Aorta (tissue), 5 donors: ENCODE measurements at regions of chr10 and their contacts with region 1.

Region 1: DNA sequence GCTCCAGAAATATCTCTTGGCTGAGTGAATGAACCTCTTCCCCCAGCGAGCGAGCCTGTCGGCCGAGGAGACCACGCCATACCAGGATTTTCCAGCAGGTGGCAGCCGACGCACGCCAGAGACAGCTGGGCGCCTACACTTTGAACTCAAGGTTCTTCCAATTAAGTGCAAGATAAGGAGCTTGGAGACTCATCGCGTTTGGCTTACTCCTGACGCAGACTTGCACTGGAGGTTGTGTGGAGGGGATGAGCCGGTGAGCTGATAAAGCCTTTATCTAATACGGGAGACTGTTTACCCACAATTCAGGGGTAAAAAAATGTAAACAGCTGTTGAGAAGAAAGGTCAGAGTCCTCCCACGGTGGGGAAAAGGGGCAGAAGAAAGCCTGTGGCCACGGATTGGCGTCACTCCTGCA is 45.9 kb upstream of the EMX2 start:
- DNase-seq: peak; percentile 80 to 94
- ATAC-seq: peak; percentile 92
- H3K4me3 ChIP-seq: no peak overlapping the region
- H3K27ac ChIP-seq: no peak overlapping the region
- H3K4me1 ChIP-seq: no peaks in the 10 kb centered on the region
- H3K27me3 ChIP-seq: no peaks in the 10 kb centered on the region

Region 2: GRCh38 chr10:117216611-117217195 is 279.9 kb before region 1 on chr10:
- intact Hi-C with region 1: loop called in 1 of 2 experiments (anchors 10 kb)
- DNase-seq: peak; percentile 68 to 90
- ATAC-seq: peak; percentile 91
- H3K4me3 ChIP-seq: no peak overlapping the region
- H3K27ac ChIP-seq: no peak overlapping the region
- H3K4me1 ChIP-seq: no peaks in the 10 kb centered on the region
- H3K27me3 ChIP-seq: no peaks in the 10 kb centered on the region

Region 3: DNA sequence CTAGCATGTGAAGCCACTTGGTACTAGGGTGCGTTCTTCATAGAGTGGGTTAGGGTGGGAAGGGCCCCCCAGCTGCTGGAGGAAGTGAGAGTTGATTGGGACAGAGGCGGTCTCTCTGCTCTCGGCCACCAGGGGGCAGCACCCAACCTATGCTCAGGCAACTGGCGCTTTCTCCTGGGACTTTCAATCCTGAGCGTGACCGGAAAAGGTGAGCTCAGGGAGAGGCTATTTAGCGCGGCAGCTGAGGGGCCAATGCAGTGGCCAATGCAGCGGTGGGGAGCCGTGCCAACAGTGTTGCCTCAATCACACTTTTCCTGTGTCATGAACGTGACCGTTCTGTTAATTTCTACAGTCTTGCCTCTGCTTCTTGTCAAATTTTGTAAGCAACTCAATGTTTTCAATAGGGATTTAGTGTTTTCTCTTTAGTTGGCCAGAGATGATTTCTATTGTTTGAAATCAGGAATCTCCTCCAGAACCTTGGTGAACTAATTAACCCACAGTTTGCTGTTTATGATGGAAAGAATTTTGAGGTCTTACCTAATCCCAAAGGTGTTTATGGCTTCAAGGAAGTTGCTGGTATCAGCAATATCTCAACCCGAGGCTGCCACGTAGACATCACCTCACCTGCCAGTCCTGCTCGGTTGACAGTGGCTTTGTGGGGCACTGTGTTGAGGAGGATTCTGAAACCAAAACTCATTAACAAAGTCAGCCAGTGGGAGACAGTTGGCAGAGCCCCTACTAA is 53.5 kb before region 1 on chr10:
- intact Hi-C with region 1: loop called in 1 of 2 experiments (anchors 5 kb)
- DNase-seq: peak; percentile 90 to 96
- ATAC-seq: peak; percentile 86
- H3K4me3 ChIP-seq: no peak overlapping the region
- H3K27ac ChIP-seq: no peak overlapping the region
- H3K4me1 ChIP-seq: no peaks in the 10 kb centered on the region
- H3K27me3 ChIP-seq: no peaks in the 10 kb centered on the region

Region 4: GRCh38 chr10:118241229-118242137 is 744.9 kb after region 1 on chr10:
- intact Hi-C with region 1: loop called (anchors 1 to 2 kb)
- DNase-seq: peak; percentile 77 to 90
- ATAC-seq: peak; percentile 84
- H3K4me3 ChIP-seq: no peak overlapping the region
- H3K27ac ChIP-seq: no peak overlapping the region
- H3K4me1 ChIP-seq: no peaks in the 10 kb centered on the region
- H3K27me3 ChIP-seq: peaks cover 0 to 2% of the 10 kb centered on the region in 2 donors

Region 5: DNA sequence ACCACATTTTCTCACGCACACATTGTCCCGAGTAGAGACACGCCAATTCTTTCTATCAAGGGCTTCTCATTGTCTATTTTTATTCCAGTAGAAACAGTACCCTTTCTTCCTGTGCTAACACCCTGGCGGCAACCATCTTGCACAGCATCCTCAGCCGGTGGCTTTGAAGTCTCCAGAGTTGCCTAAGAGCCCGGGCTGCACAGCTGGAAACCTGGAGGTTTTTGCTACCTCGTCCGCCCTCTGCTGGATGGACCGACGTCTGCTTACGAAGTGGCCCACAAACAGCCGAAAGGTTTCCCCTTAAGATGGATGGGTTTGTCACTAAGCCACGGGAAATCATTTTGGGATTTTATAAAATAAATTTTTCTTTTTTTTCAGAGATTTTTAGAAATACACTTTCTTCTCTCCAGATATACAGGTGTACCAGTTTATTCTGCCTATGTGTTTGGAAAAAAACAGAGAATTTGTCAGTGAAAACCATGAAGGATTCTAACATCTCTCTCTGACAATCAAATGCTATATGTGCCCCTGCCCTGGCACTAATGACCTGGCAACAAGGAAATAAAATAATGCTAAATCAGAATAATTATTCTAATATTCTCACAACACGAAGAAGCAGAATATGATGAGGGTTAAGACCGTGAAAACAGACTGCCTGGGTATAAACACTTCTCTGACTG is 927.3 kb after region 1 on chr10:
- intact Hi-C with region 1: loop called in 1 of 2 experiments (anchors 5 kb)
- DNase-seq: peak; percentile 84 to 90
- ATAC-seq: peak; percentile 90
- H3K4me3 ChIP-seq: no peak overlapping the region
- H3K27ac ChIP-seq: no peak overlapping the region
- H3K4me1 ChIP-seq: no peaks in the 10 kb centered on the region
- H3K27me3 ChIP-seq: peaks cover 0 to 5% of the 10 kb centered on the region in 2 donors

Region 6: GRCh38 chr10:118459726-118460193 is 963.1 kb after region 1 on chr10:
- intact Hi-C with region 1: loop called (anchors 5 to 10 kb)
- DNase-seq: peak in 1 of 2 donors; percentile 58
- ATAC-seq: peak; percentile 70
- H3K4me3 ChIP-seq: no peak overlapping the region
- H3K27ac ChIP-seq: no peak overlapping the region
- H3K4me1 ChIP-seq: no peaks in the 10 kb centered on the region
- H3K27me3 ChIP-seq: peaks cover 0 to 4% of the 10 kb centered on the region in 2 donors